Aorta (tissue), 5 donors: ENCODE measurements at regions of chr5 and their contacts with region 1.

Region 1: DNA sequence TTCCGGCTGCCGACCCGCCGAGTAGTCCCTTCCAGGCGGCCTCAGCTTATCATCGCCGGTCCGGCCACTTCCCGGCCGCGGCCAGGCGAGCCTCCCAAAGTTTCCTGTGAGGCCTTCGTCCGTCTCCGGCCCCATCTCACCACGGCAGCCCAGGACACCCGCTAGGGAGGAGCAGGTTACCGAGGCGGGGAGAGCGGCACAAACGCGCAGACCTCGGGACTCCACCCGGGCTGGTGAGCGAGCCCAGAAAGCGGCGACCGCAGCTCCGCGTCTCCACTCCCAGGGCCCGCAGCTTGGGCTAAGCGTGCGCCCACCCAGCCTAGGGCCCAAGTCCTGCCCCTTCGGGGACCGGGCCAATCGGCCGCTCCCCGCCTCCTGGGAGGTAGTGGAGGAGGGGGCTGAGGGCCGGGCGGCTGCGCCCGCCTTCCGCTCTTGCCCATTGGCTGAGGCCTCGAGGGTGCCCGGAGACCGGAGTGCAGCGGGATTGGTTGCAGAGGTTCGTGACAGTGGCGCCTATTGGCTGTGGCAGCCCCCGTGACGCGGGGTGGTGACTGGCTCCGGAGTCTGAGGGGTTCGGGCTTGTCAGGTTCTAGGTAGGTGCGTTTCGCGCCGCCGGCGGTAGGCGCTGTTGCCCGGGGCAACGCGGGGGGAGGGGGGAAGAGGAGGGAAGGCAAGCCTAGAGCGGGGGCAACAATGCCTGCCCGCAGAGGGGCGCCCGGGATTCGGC is 867 bp downstream of the FER start:
- DNase-seq: peak; percentile 99 to 100
- ATAC-seq: peak; percentile 99
- H3K4me3 ChIP-seq: peak overlapping the region; percentile 46 to 90
- H3K27ac ChIP-seq: peak overlapping the region; percentile 85 to 97
- H3K4me1 ChIP-seq: no peaks in the 10 kb centered on the region
- H3K27me3 ChIP-seq: no peaks in the 10 kb centered on the region

Region 2: GRCh38 chr5:108727651-108728565 is 20.7 kb before region 1 on chr5:
- intact Hi-C with region 1: loop called (anchors 1 kb)
- DNase-seq: peak; percentile 95
- ATAC-seq: peak; percentile 100
- H3K4me3 ChIP-seq: peak overlapping the region; percentile 56 to 80
- H3K27ac ChIP-seq: peak overlapping the region in 1 of 2 donors; percentile 86
- H3K4me1 ChIP-seq: no peaks in the 10 kb centered on the region
- H3K27me3 ChIP-seq: no peaks in the 10 kb centered on the region